CD4-positive, alpha-beta T cell (primary cell): ENCODE measurements at regions of chr12 and their contacts with region 1.

Region 1: DNA sequence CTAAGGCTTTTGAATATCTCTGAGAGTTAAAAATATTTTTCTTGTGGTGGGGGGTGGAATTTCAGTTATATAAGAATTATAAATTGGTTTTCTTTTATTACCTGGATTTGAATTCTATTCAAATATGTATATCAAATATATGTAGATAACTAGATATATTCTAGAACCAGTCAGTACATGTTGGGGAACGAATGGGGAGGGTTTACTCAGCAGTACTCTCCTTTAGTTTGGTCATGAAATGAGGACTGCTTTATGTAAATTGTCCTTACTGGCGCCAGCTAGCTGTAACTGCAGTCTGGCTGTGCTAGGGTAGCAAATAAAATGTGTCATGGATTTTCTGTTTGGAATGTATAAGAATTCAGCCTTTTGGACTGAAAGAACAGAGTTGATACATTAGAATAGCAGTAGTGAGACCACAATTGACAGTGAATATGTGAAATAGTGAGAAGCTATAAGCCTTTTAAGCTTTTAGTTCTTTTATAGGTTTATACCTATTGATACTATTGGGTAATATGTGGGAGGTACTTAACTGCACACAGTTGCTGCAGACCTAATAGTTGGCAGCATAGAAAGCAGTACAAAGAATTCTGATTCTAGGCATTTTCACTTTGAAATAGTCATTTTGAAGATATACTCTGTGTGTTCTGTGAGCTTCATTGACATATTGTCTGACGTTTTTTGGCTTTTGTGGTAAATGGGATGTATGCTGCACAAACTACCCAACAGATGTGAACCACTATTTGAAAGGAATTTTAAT is 29.0 kb downstream of the ATF7IP start:
- DNase-seq: peak in 7 of 14 experiments; percentile 15 to 86 (median 36)
- ATAC-seq: peak; percentile 70
- H3K4me3 ChIP-seq: peak overlapping the region; percentile 10
- H3K4me3 Mint-ChIP-seq: peak overlapping the region; percentile 83
- H3K27ac ChIP-seq: peak overlapping the region; percentile 58 to 66
- H3K27ac Mint-ChIP-seq: peak overlapping the region; percentile 91
- H3K4me1 ChIP-seq: peaks cover 25% of the 10 kb centered on the region
- H3K4me1 Mint-ChIP-seq: peaks cover 90% of the 10 kb centered on the region
- H3K27me3 ChIP-seq: no peaks in the 10 kb centered on the region
- H3K27me3 Mint-ChIP-seq: no peaks in the 10 kb centered on the region
- CTCF ChIP-seq: no peak

Region 2: DNA sequence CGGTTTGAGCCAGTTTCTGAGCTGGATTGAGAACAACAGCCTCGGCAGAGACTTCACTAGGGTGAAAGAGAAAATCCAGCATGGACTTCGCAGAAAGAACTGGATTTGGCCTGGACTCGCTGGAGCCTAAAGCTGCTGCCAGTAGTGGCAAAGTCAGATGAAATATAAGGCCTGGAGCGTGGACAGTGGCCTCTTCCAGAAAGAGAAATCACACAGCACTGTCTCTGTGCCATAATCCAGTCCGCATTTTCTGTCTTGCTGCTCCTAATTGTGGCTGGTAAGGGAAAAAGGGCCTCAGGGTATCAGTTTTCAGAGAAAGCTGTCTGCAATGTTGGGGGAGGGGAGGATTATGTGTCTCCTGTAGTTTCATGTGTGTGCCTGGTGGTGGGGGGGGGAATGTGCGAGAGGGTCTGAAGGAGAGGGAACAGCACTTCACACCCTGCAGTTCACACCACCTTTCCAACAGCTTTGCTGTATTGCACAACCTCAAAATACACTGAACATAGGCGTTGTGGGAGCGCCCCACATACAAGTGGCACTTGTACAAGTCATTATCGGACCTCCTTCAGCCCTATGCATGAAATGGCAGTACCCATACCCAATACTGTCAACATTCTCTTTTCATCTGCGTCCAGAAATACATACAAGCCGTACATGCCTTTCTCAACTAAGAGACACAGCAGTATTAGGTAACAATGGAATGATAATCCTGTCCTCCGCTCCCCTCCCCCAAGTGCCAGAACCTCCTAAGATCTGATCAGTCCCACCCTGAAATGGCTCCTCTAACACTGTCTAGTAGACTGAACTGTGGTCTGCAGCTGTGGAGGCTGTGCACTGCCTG is 136.5 kb before region 1 on chr12:
- CTCF ChIA-PET with region 1: no interaction called
- POLR2A ChIA-PET with region 1: interaction called, 18 read pairs
- intact Hi-C with region 1: loop called in 1 of 2 experiments (anchors 1 kb)
- DNase-seq: peak; percentile 57 to 95 (median 68)
- ATAC-seq: peak; percentile 54
- H3K4me3 ChIP-seq: peak overlapping the region; percentile 21
- H3K4me3 Mint-ChIP-seq: peak overlapping the region; percentile 83
- H3K27ac ChIP-seq: peak overlapping the region; percentile 68 to 84
- H3K27ac Mint-ChIP-seq: peak overlapping the region; percentile 98
- H3K4me1 ChIP-seq: peaks cover 43% of the 10 kb centered on the region
- H3K4me1 Mint-ChIP-seq: peaks cover 55% of the 10 kb centered on the region
- H3K27me3 ChIP-seq: no peaks in the 10 kb centered on the region
- H3K27me3 Mint-ChIP-seq: no peaks in the 10 kb centered on the region
- CTCF ChIP-seq: no peak

Region 3: DNA sequence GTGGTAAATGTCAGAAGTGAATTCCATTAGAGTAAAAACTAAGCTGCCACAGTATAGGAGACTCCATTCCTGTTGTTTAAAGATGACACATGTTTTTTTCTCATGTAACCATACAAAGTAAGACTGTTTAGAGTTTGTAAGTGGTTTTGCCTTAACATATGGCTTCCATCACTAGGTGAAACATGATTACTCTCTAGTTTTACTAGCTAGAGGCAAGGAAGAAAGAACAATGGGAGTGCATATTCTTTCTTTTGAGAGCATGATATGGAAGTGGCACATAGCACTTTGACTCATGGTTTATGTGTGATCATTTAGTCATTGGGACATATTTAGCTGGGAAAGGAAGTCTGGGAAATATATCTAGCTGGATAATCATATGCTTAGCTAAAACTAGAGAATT is 21.3 kb before region 1 on chr12:
- CTCF ChIA-PET with region 1: interaction called, 4 read pairs
- POLR2A ChIA-PET with region 1: interaction called, 10 read pairs
- intact Hi-C with region 1: loop called in 1 of 2 experiments (anchors 2 kb)
- DNase-seq: no peak
- ATAC-seq: peak; percentile 30
- H3K4me3 ChIP-seq: no peak overlapping the region
- H3K4me3 Mint-ChIP-seq: peak overlapping the region; percentile 36
- H3K27ac ChIP-seq: peak overlapping the region in 1 of 2 donors; percentile 7
- H3K27ac Mint-ChIP-seq: peak overlapping the region; percentile 84
- H3K4me1 ChIP-seq: peaks cover 21% of the 10 kb centered on the region
- H3K4me1 Mint-ChIP-seq: peaks cover 70% of the 10 kb centered on the region
- H3K27me3 ChIP-seq: no peaks in the 10 kb centered on the region
- H3K27me3 Mint-ChIP-seq: no peaks in the 10 kb centered on the region
- CTCF ChIP-seq: no peak

Region 4: GRCh38 chr12:15789220-15790171 is 1395.0 kb after region 1 on chr12 and contains the start of gene EPS8:
- CTCF ChIA-PET with region 1: no interaction called
- POLR2A ChIA-PET with region 1: no interaction called
- intact Hi-C with region 1: loop called in 1 of 2 experiments (anchors 10 kb)
- DNase-seq: peak; percentile 77 to 94 (median 86)
- ATAC-seq: peak; percentile 92
- H3K4me3 ChIP-seq: peak within 1 kb of the TSS; percentile 69
- H3K4me3 Mint-ChIP-seq: peak within 1 kb of the TSS; percentile 98
- H3K27ac ChIP-seq: no peak within 1 kb of the TSS
- H3K27ac Mint-ChIP-seq: peak within 1 kb of the TSS; percentile 60
- H3K4me1 ChIP-seq: peaks cover 19% of the 10 kb centered on the region
- H3K4me1 Mint-ChIP-seq: peaks cover 15% of the 10 kb centered on the region
- H3K27me3 ChIP-seq: peaks cover 3 to 38% of the 10 kb centered on the region in 2 experiments
- H3K27me3 Mint-ChIP-seq: peaks cover 60% of the 10 kb centered on the region
- CTCF ChIP-seq: no peak
- total RNA-seq, gene EPS8: 0.80 to 1.1 TPM